ENCODE measurements at regions of chr12 and their contacts with region 1.

Region 1: GRCh38 chr12:116955382-116956021 is 44.8 kb downstream of the FBXW8 start:
- DNase-seq: peak; percentile 14
- H3K4me3 Mint-ChIP-seq: no peak overlapping the region
- H3K27ac Mint-ChIP-seq: no peak overlapping the region
- H3K4me1 Mint-ChIP-seq: peaks cover 14% of the 10 kb centered on the region
- H3K27me3 Mint-ChIP-seq: no peaks in the 10 kb centered on the region

Region 2: DNA sequence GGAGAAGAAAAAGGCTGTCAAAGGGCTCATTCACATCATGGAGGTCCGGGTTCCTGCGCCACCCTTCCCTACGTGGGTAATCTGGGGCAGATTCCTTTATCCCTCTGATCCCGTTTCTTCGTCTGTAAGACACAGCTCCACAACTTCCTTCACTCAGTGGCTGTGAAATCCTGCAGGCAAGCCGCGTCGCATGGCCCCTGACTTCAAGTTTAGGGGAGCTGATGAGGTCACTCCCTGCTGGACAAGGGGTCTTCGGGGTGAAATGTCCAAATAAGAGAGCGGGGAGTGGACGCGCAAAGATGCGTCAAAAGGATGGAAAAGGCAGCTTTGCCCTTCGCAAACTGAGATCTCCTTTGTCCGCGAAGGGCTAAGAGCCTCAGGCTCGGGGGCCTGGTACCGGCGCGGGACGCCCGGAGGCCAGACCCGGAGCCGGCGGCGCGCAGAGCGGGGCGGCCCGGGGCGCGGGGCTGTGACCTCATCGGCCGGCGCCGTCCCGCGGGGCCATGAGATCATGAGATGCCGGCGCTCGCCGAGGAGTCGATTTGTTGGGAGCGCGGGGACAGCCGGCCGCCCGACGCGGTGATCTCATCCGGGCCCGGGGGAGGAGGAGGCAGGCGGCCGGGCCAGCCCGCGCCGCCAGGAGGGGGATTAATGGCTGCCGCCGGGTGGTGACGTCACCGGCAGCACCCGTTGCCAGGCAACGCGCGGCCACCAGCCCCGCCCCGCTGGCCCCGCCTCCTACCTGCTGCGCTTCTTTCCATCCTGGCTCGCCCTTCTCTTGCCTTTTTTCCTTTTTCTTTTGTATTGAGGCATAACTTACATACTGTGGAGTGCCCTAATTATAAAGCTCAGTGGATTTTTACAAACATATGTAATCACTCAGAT is 136.3 kb before region 1 on chr12:
- CTCF ChIA-PET with region 1: no interaction called
- intact Hi-C with region 1: loop called (anchors 2 kb)
- DNase-seq: peak; percentile 87
- H3K4me3 Mint-ChIP-seq: peak overlapping the region; percentile 95
- H3K27ac Mint-ChIP-seq: peak overlapping the region; percentile 91
- H3K4me1 Mint-ChIP-seq: peaks cover 11% of the 10 kb centered on the region
- H3K27me3 Mint-ChIP-seq: no peaks in the 10 kb centered on the region

Region 3: DNA sequence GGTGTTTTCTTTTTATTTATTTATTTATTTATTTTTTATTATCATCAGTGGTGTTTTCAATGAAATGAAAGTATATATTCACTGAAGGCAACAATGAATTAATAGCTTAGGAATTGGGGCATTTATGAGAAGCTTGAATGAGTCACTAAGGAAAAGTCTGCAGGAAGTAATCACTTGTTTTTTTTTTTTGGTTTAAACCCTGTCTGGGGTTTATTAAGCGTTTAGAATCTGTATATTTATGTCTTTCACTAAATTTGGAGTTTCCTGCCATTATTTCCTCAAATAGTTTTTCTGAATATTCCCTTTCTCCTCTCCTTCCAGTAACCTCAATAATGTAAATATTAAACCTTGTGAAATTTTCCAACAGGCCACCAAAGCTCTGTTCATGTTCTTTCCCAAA is 58.2 kb after region 1 on chr12:
- CTCF ChIA-PET with region 1: no interaction called
- intact Hi-C with region 1: no loop called
- DNase-seq: no peak
- H3K4me3 Mint-ChIP-seq: no peak overlapping the region
- H3K27ac Mint-ChIP-seq: no peak overlapping the region
- H3K4me1 Mint-ChIP-seq: no peaks in the 10 kb centered on the region
- H3K27me3 Mint-ChIP-seq: no peaks in the 10 kb centered on the region

Measured in activated naive CD4-positive, alpha-beta T cell treated with anti-CD3 and anti-CD28 coated beads for 36 hours (primary cell).